CD8-positive, alpha-beta T cell (primary cell): ENCODE measurements at regions of chr13 and their contacts with region 1.

Region 1: GRCh38 chr13:77168237-77168636 is 141.3 kb upstream of the FBXL3 start:
- DNase-seq: no peak
- ATAC-seq: no peak
- H3K4me3 ChIP-seq: no peak overlapping the region
- H3K4me3 Mint-ChIP-seq: no peak overlapping the region
- H3K27ac ChIP-seq: no peak overlapping the region
- H3K27ac Mint-ChIP-seq: no peak overlapping the region
- H3K4me1 ChIP-seq: no peaks in the 10 kb centered on the region
- H3K4me1 Mint-ChIP-seq: peaks cover 7% of the 10 kb centered on the region
- H3K27me3 ChIP-seq: no peaks in the 10 kb centered on the region
- H3K27me3 Mint-ChIP-seq: no peaks in the 10 kb centered on the region
- CTCF ChIP-seq: no peak

Region 2: GRCh38 chr13:77124423-77124822 is 43.8 kb before region 1 on chr13:
- CTCF ChIA-PET with region 1: no interaction called
- POLR2A ChIA-PET with region 1: no interaction called
- intact Hi-C with region 1: loop called in 1 of 2 experiments (anchors 5 kb)
- DNase-seq: no peak
- ATAC-seq: no peak
- H3K4me3 ChIP-seq: no peak overlapping the region
- H3K4me3 Mint-ChIP-seq: no peak overlapping the region
- H3K27ac ChIP-seq: no peak overlapping the region
- H3K27ac Mint-ChIP-seq: no peak overlapping the region
- H3K4me1 ChIP-seq: no peaks in the 10 kb centered on the region
- H3K4me1 Mint-ChIP-seq: no peaks in the 10 kb centered on the region
- H3K27me3 ChIP-seq: no peaks in the 10 kb centered on the region
- H3K27me3 Mint-ChIP-seq: no peaks in the 10 kb centered on the region
- CTCF ChIP-seq: no peak

Region 3: DNA sequence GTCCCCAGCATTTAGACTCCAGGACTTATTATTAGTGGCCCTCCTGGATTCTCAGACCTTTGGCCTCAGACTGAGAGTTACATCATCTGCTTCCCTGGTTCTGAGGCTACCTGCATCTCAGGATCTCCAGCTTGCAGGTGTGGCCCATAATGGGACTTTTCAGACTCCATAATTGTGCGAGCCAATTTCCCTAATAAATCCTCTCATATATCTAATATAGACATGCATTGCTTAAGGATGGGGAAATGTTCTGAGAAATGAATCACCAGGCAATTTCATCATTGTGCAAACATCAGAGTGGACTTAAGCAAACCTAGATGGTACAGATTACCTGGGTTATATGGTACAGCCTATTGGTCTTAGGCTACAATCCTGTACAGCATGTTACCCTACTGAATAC is 24.8 kb before region 1 on chr13:
- CTCF ChIA-PET with region 1: no interaction called
- POLR2A ChIA-PET with region 1: no interaction called
- intact Hi-C with region 1: loop called in 1 of 2 experiments (anchors 2 kb)
- DNase-seq: no peak
- ATAC-seq: no peak
- H3K4me3 ChIP-seq: no peak overlapping the region
- H3K4me3 Mint-ChIP-seq: no peak overlapping the region
- H3K27ac ChIP-seq: no peak overlapping the region
- H3K27ac Mint-ChIP-seq: no peak overlapping the region
- H3K4me1 ChIP-seq: no peaks in the 10 kb centered on the region
- H3K4me1 Mint-ChIP-seq: no peaks in the 10 kb centered on the region
- H3K27me3 ChIP-seq: no peaks in the 10 kb centered on the region
- H3K27me3 Mint-ChIP-seq: no peaks in the 10 kb centered on the region
- CTCF ChIP-seq: no peak

Region 4: DNA sequence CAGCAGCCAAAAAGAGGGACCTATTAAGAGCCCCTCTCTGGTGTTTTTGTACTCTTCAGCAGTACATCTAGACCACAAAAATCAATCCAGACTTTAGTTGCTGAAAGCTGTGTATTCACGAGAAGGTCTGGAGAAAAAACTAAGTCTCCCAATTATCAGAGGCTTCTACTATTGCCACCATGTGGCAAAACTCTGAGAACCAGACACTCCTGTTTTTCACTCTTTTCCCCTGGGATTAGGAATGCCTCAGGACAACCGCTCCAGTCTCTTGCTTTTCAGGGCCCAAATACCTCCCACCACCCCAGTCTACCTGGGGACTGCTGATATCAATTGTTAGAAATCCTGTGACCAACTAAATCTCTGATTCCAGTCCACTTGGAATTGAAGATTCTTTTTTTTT is 1520.8 kb after region 1 on chr13:
- CTCF ChIA-PET with region 1: no interaction called
- POLR2A ChIA-PET with region 1: no interaction called
- intact Hi-C with region 1: no loop called
- DNase-seq: no peak
- ATAC-seq: no peak
- H3K4me3 ChIP-seq: no peak overlapping the region
- H3K4me3 Mint-ChIP-seq: no peak overlapping the region
- H3K27ac ChIP-seq: no peak overlapping the region
- H3K27ac Mint-ChIP-seq: no peak overlapping the region
- H3K4me1 ChIP-seq: no peaks in the 10 kb centered on the region
- H3K4me1 Mint-ChIP-seq: no peaks in the 10 kb centered on the region
- H3K27me3 ChIP-seq: no peaks in the 10 kb centered on the region
- H3K27me3 Mint-ChIP-seq: peaks cover 5% of the 10 kb centered on the region
- CTCF ChIP-seq: no peak